Lower leg skin (tissue), 4 donors: ENCODE measurements at regions of chr6 and their contacts with region 1.

Region 1: GRCh38 chr6:89970609-89971337 is 76.5 kb downstream of the GJA10 start:
- DNase-seq: no peak
- H3K4me3 ChIP-seq: no peak overlapping the region
- CTCF ChIP-seq: peak in 1 of 3 donors; percentile 60
- POLR2A ChIP-seq: no peak

Region 2: DNA sequence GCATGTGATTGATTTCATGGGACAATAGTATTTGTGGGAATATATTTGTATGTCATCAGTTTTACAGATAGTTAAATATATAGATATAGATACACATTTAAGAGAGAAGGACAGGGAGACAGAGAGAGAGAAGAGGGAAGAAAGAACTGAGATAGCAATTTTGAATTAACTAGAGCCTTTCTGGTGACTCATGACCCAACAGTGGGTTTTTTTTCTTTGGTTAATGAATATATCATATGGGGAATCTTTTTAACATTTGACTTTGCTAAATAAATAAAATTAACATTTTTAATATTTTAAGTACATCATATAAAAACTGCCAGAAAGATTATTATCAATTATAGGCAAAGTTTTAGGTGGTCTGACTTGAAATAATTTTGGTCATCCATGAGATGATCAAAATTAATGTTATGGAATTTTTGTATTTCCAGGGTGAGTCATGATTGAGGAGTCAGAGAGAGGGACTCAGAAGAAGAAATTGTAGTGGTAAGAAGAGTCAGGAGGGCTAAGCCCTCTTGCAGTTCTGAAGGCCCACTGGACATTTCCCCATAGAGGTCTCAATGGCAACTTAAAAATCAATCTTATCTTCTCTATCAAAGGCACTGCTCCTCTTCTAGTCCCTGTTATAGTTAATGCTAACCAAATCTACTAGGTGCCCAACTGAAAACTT is 1124.2 kb after region 1 on chr6:
- intact Hi-C with region 1: loop called (anchors 5 kb)
- DNase-seq: no peak
- H3K4me3 ChIP-seq: no peak overlapping the region
- CTCF ChIP-seq: no peak
- POLR2A ChIP-seq: no peak